Aorta (tissue), 5 donors: ENCODE measurements at regions of chr1 and their contacts with region 1.

Region 1: GRCh38 chr1:198088360-198089071 is 68.3 kb upstream of the NEK7 start:
- DNase-seq: no peak
- ATAC-seq: peak; percentile 60
- H3K4me3 ChIP-seq: no peak overlapping the region
- H3K27ac ChIP-seq: no peak overlapping the region
- H3K4me1 ChIP-seq: peaks cover 0 to 2% of the 10 kb centered on the region in 2 donors
- H3K27me3 ChIP-seq: no peaks in the 10 kb centered on the region

Region 2: DNA sequence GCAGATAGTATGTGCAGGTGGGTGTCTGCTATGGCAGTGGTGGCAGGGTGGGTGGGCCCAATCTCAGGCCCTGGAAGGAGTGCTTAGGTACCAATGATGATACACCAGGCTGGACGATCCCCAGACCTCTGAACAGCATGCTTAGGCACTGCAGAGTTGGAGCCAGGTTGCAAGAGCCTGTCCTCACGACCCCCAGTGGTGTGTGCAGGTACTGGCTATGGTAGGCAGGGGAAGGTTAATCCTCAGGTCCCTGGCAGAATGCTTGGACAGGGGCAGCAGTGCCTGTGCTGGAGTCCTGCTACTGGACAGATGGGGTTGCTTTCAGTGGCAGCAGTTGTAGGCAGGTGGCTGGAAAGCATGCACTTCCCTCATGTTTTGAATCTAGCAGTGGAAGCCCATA is 32.3 kb before region 1 on chr1:
- intact Hi-C with region 1: no loop called
- DNase-seq: no peak
- ATAC-seq: no peak
- H3K4me3 ChIP-seq: no peak overlapping the region
- H3K27ac ChIP-seq: no peak overlapping the region
- H3K4me1 ChIP-seq: no peaks in the 10 kb centered on the region
- H3K27me3 ChIP-seq: no peaks in the 10 kb centered on the region

Region 3: GRCh38 chr1:198359024-198359653 is 270.6 kb after region 1 on chr1:
- intact Hi-C with region 1: loop called (anchors 5 to 10 kb)
- DNase-seq: no peak
- ATAC-seq: no peak
- H3K4me3 ChIP-seq: no peak overlapping the region
- H3K27ac ChIP-seq: no peak overlapping the region
- H3K4me1 ChIP-seq: no peaks in the 10 kb centered on the region
- H3K27me3 ChIP-seq: no peaks in the 10 kb centered on the region